Naive thymus-derived CD4-positive, alpha-beta T cell (primary cell): ENCODE measurements at regions of chr6 and their contacts with region 1.

Region 1: GRCh38 chr6:1554476-1555310 is 55.0 kb upstream of the FOXC1 start:
- DNase-seq: peak; percentile 45 to 81 (median 73)
- ATAC-seq: peak; percentile 94
- H3K4me3 ChIP-seq: peak overlapping the region; percentile 64
- H3K4me3 Mint-ChIP-seq: peak overlapping the region; percentile 76 to 93 (median 86)
- H3K27ac ChIP-seq: peak overlapping the region; percentile 36
- H3K27ac Mint-ChIP-seq: peak overlapping the region; percentile 47 to 96 (median 72)
- H3K4me1 ChIP-seq: peaks cover 4 to 7% of the 10 kb centered on the region in 2 donors
- H3K4me1 Mint-ChIP-seq: peaks cover 8 to 54% (median 25%) of the 10 kb centered on the region in 7 donors
- H3K27me3 ChIP-seq: no peaks in the 10 kb centered on the region
- H3K27me3 Mint-ChIP-seq: peaks cover 0 to 41% (median 6%) of the 10 kb centered on the region in 5 donors

Region 2: GRCh38 chr6:1535295-1535694 is 19.4 kb before region 1 on chr6:
- CTCF ChIA-PET with region 1: interaction called, 4 read pairs
- POLR2A ChIA-PET with region 1: interaction called, 3 read pairs
- intact Hi-C with region 1: loop called in 1 of 2 experiments (anchors 1 kb)
- DNase-seq: peak in 5 of 9 donors; percentile 34 to 46 (median 37)
- ATAC-seq: peak; percentile 73
- H3K4me3 ChIP-seq: no peak overlapping the region
- H3K4me3 Mint-ChIP-seq: peak overlapping the region in 8 of 10 donors; percentile 62 to 79 (median 70)
- H3K27ac ChIP-seq: peak overlapping the region; percentile 35
- H3K27ac Mint-ChIP-seq: peak overlapping the region in 5 of 9 donors; percentile 32 to 85 (median 75)
- H3K4me1 ChIP-seq: peaks cover 20 to 25% of the 10 kb centered on the region in 2 donors
- H3K4me1 Mint-ChIP-seq: peaks cover 12 to 45% (median 20%) of the 10 kb centered on the region in 7 donors
- H3K27me3 ChIP-seq: no peaks in the 10 kb centered on the region
- H3K27me3 Mint-ChIP-seq: no peaks in the 10 kb centered on the region